ENCODE measurements at regions of chr20 and their contacts with region 1.

Region 1: DNA sequence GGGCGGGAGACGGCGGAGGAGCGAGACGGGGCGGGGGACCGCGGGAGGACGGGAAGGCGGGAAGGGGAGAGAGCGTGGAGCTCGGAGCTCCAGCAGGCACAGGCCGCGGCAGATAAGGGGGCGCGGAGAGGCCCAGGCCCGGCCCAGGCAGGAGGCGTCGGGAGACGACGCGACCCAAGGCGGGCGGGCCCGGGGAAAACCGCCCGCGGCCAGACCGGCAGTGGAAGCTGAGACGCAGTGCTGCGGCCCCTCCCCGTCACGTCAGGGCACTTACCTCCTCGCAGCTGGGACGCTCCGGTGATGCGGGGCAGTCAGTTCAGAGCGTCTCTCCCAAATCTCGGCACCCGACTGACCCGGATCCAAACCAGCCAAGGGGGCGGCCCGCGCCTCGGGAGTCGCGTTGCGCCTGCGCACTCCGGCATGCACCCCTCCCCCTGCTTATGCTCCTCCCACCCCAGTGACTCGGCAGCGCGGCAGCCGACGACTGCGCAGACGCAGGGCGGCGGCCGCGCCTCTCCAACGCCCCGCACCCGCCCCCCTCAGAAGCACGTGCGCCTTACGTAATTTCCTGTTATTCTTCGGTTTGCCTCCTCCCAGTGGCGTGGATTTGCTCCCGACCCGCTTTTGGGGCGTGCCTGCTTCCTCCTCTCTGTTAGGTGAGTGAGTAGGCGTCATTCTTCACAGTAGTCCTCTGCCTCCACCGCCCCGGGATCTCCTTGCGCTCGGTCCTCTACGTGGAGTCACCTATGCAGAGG is at the start of gene OSER1:
- DNase-seq: peak; percentile 97 to 99 (median 98)
- ATAC-seq: peak; percentile 83
- H3K4me3 ChIP-seq: peak within 1 kb of the TSS; percentile 78 to 91
- H3K4me3 Mint-ChIP-seq: peak within 1 kb of the TSS; percentile 96
- H3K27ac ChIP-seq: peak within 1 kb of the TSS; percentile 93 to 96
- H3K27ac Mint-ChIP-seq: peak within 1 kb of the TSS; percentile 99
- H3K4me1 ChIP-seq: peaks cover 43% of the 10 kb centered on the region
- H3K4me1 Mint-ChIP-seq: peaks cover 73% of the 10 kb centered on the region
- H3K27me3 ChIP-seq: no peaks in the 10 kb centered on the region
- H3K27me3 Mint-ChIP-seq: no peaks in the 10 kb centered on the region
- CTCF ChIP-seq: no peak
- total RNA-seq, gene OSER1: 201 to 204 TPM

Region 2: DNA sequence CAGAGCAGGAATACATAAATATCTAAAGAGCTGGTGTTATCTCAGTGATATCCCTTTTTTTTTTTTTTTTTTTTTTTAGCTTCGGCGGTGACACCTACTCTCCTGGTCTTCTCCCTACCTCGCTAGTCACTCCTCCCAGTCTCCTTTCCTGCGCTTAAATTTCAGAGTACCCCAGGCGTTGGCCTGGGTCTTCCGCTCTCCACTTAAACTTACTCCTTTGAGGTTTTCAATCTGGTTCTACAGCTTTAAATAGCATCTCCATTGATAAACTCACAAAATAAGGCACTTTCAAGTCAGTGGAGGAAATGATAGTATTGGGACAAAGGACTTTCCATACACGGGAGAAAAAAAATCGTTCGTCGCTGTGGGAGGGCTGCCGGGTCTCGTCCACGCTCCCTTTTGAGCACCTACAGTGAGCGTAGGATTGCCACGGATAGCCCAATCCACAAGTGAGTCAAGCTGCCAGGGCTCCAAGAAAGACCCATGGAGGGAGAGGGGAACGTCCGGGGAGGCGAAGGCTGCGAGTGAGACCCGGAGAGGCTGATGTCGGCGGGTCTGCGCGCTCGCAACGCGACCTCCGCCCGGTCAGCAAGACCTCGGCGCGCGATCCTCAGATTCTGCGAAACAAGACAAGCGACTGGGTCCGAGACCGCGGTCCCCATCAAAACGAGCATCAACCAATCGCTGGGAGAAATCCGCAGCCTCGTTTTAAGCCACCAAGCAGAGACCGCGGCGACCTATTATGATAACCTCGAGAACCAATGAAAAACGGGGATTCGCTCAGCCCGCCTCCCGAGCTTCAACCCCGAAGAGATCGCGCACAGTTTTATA is 753.6 kb before region 1 on chr20:
- CTCF ChIA-PET with region 1: no interaction called
- POLR2A ChIA-PET with region 1: no interaction called
- intact Hi-C with region 1: loop called (anchors 1 to 2 kb)
- DNase-seq: peak; percentile 68 to 94 (median 87)
- ATAC-seq: peak; percentile 79
- H3K4me3 ChIP-seq: peak overlapping the region; percentile 97 to 100
- H3K4me3 Mint-ChIP-seq: peak overlapping the region; percentile 92
- H3K27ac ChIP-seq: peak overlapping the region; percentile 98 to 100
- H3K27ac Mint-ChIP-seq: peak overlapping the region; percentile 98
- H3K4me1 ChIP-seq: peaks cover 16% of the 10 kb centered on the region
- H3K4me1 Mint-ChIP-seq: peaks cover 36% of the 10 kb centered on the region
- H3K27me3 ChIP-seq: no peaks in the 10 kb centered on the region
- H3K27me3 Mint-ChIP-seq: peaks cover 8% of the 10 kb centered on the region
- CTCF ChIP-seq: no peak

Region 3: DNA sequence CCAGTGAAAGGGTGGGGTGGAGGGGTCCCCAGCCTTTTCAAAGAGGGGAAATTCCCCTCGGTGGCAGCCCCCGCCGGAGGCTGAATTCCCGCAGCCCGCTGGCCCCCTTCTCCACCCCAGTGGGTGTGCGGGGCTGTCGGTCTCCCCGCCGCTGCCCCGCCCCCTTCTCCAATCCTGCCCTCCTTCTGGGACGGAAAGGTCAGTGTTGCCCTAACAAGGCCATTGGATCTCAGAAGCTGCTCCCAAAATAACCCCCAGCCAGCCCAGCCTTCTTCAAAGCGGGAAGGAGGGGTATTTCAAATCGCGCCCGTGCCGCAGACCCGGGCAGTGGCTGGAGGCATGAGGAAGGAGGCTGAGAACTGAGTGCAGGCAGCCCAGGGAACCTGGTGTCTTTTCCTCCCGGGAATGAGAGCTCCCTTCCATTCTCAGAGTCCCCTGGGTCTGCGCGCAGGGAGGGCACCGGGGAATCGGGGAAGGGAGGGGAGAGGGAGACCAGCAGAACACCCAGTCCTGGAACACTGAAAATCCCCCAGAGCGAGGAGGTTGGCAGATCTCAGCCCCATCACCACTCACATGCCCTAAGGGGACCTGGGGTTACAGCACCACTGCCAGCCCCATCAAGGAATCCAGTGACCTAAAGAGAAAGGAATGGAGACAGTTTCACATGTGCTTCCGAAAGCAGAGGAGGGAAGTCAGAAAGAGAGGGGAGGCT is 23.4 kb before region 1 on chr20 and contains the start of gene JPH2:
- CTCF ChIA-PET with region 1: interaction called, 12 read pairs
- POLR2A ChIA-PET with region 1: no interaction called
- intact Hi-C with region 1: no loop called
- DNase-seq: no peak
- ATAC-seq: peak; percentile 11
- H3K4me3 ChIP-seq: peak within 1 kb of the TSS in 1 of 2 experiments; percentile 29
- H3K4me3 Mint-ChIP-seq: peak within 1 kb of the TSS; percentile 16
- H3K27ac ChIP-seq: no peak within 1 kb of the TSS
- H3K27ac Mint-ChIP-seq: no peak within 1 kb of the TSS
- H3K4me1 ChIP-seq: peaks cover 16% of the 10 kb centered on the region
- H3K4me1 Mint-ChIP-seq: peaks cover 9% of the 10 kb centered on the region
- H3K27me3 ChIP-seq: peaks cover 19 to 23% of the 10 kb centered on the region in 2 experiments
- H3K27me3 Mint-ChIP-seq: peaks cover 49% of the 10 kb centered on the region
- CTCF ChIP-seq: no peak
- total RNA-seq, gene JPH2: not detected

Region 4: DNA sequence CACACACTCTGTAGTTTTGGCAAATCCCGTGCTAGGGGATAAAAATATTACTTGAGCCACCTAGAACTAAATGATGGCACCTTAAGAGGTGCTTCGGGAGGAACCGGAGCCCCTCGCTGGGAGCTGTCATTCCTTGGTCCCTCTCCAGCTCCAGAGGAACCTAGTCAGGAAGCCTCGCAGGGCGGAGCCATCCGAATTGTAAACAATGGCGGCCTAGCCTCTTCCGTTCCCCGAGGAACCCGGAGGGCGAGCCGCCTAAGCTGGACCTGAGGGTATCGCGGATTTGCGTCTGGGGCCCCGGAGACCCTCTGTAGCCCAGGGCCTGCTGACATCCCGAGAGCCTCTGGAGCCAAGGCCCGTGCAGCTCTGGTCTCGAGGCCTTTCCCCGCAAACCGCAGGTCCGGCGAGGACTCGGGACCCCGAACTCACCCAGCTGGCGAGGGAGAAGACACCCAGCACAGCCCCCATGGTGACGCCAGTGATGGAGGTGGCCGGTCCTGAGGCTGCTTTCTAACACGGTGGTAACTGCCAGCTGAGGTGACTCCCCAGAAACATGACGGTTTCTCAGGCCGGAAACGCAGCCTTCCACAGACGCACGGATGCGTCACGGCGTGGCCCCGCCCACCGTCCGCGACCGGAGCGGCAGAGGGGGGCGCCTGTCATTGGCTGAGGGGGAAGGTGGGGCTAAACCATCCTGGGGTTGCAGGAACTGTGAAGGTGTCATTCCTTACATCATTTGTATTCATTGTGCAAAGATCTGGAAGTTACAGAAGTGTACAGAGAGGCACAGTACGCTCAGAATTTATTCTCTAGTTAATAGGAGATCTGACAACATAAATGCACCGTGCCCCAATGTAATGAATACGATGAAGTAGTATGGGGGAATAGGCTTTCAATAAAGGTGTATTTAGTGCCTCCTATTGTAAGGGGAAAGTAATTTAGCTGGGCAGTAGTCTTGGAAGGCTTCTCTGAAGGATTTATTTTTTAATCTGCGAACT is 311.2 kb after region 1 on chr20 and contains the start of gene SERINC3:
- CTCF ChIA-PET with region 1: no interaction called
- POLR2A ChIA-PET with region 1: no interaction called
- intact Hi-C with region 1: loop called (anchors 1 kb)
- DNase-seq: peak; percentile 96 to 99 (median 98)
- ATAC-seq: peak; percentile 93
- H3K4me3 ChIP-seq: peak within 1 kb of the TSS; percentile 88 to 100
- H3K4me3 Mint-ChIP-seq: peak within 1 kb of the TSS; percentile 86
- H3K27ac ChIP-seq: peak within 1 kb of the TSS; percentile 98 to 100
- H3K27ac Mint-ChIP-seq: peak within 1 kb of the TSS; percentile 96
- H3K4me1 ChIP-seq: peaks cover 52% of the 10 kb centered on the region
- H3K4me1 Mint-ChIP-seq: peaks cover 55% of the 10 kb centered on the region
- H3K27me3 ChIP-seq: no peaks in the 10 kb centered on the region
- H3K27me3 Mint-ChIP-seq: no peaks in the 10 kb centered on the region
- CTCF ChIP-seq: no peak
- total RNA-seq, gene SERINC3: 39.0 to 46.0 TPM

Region 5: GRCh38 chr20:44651684-44652423 is 441.3 kb after region 1 on chr20 and contains the start of gene ADA:
- CTCF ChIA-PET with region 1: no interaction called
- POLR2A ChIA-PET with region 1: no interaction called
- intact Hi-C with region 1: loop called (anchors 10 kb)
- DNase-seq: peak in 8 of 9 experiments; percentile 19 to 75 (median 55)
- ATAC-seq: peak; percentile 66
- H3K4me3 ChIP-seq: peak within 1 kb of the TSS; percentile 87 to 97
- H3K4me3 Mint-ChIP-seq: peak within 1 kb of the TSS; percentile 88
- H3K27ac ChIP-seq: peak within 1 kb of the TSS; percentile 70 to 75
- H3K27ac Mint-ChIP-seq: peak within 1 kb of the TSS; percentile 91
- H3K4me1 ChIP-seq: peaks cover 47% of the 10 kb centered on the region
- H3K4me1 Mint-ChIP-seq: peaks cover 46% of the 10 kb centered on the region
- H3K27me3 ChIP-seq: no peaks in the 10 kb centered on the region
- H3K27me3 Mint-ChIP-seq: no peaks in the 10 kb centered on the region
- CTCF ChIP-seq: no peak
- total RNA-seq, gene ADA: 27.9 to 30.2 TPM